ENCODE measurements at regions of chr14 and their contacts with region 1.

Region 1: GRCh38 chr14:23929822-23930294 is 23.7 kb upstream of the DHRS4 start:
- DNase-seq: peak; percentile 95
- ATAC-seq: peak; percentile 97
- H3K4me3 Mint-ChIP-seq: no peak overlapping the region
- H3K27ac Mint-ChIP-seq: no peak overlapping the region
- H3K4me1 Mint-ChIP-seq: no peaks in the 10 kb centered on the region
- H3K27me3 Mint-ChIP-seq: no peaks in the 10 kb centered on the region
- CTCF ChIP-seq: peak; percentile 98

Region 2: GRCh38 chr14:23727566-23728335 is 202.1 kb before region 1 on chr14:
- CTCF ChIA-PET with region 1: interaction called, 5 read pairs
- POLR2A ChIA-PET with region 1: no interaction called
- intact Hi-C with region 1: loop called (anchors 10 kb)
- DNase-seq: no peak
- ATAC-seq: peak; percentile 60
- H3K4me3 Mint-ChIP-seq: no peak overlapping the region
- H3K27ac Mint-ChIP-seq: no peak overlapping the region
- H3K4me1 Mint-ChIP-seq: no peaks in the 10 kb centered on the region
- H3K27me3 Mint-ChIP-seq: no peaks in the 10 kb centered on the region
- CTCF ChIP-seq: peak; percentile 50

Region 3: DNA sequence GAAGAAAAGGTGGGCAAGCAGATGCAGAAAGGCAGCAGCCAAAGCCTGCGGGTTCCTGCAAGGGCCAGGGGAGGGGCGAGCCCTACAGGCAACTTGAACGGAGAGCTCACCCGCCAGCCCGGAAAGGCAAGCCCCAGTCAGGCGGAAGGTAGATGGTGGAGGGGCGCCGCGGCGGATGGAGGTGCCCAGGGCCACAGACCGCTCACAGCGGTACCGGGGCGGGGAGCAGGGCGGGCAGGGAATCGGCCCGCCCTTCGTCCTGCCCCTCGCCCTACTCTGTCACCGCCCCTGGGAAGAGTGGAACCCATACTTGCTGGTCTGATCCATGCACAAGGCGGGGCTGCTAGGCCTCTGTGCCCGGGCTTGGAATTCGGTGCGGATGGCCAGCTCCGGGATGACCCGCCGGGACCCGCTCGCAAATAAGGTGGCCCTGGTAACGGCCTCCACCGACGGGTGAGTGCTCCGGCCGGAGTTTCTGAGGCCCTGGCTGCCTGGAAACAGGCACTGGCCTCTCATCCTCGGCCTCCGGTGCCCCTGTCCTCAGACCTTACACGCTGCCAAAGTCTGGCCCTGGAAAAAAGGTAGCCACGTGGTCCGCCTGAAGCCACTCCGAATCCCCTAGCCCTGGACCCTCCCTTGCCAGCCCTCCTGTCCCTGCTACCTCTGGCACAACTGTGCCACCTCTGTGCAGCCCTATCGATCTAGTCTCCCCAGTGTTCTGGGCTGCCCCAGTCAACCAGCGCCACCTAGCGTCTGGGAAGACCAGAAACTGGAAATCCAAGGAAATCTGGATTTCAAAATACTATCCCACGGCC is 23.8 kb after region 1 on chr14 and contains the start of gene DHRS4:
- CTCF ChIA-PET with region 1: interaction called, 13 read pairs
- POLR2A ChIA-PET with region 1: no interaction called
- intact Hi-C with region 1: no loop called
- DNase-seq: peak; percentile 88
- ATAC-seq: peak; percentile 98
- H3K4me3 Mint-ChIP-seq: peak within 1 kb of the TSS; percentile 87
- H3K27ac Mint-ChIP-seq: peak within 1 kb of the TSS; percentile 91
- H3K4me1 Mint-ChIP-seq: peaks cover 24% of the 10 kb centered on the region
- H3K27me3 Mint-ChIP-seq: no peaks in the 10 kb centered on the region
- CTCF ChIP-seq: peak; percentile 97
- total RNA-seq, gene DHRS4: 19.9 to 21.7 TPM

Measured in activated CD8-positive, alpha-beta T cell treated with anti-CD3 and anti-CD28 coated beads for 36 hours (primary cell).